Sciatic nerve (tissue), 2 donors: ENCODE measurements at regions of chr10 and their contacts with region 1.

Region 1: DNA sequence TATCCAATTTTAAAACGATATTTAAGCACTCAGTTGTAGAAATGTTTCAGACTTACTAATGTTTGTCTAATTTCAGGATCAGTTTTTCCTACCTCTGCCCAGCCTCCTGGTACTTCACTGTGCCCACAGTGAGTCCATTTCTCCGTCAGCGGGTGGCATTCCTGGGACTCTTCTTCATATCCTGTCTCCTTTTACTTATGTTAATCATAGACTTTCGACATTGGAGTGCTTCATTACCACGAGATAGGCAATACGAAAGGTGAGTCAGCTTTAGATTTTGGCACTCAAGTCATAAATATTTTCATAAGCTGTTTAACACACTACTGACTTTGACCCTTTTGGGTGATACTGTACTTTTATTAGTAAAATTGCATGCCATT is 2.1 kb downstream of the ENTPD7 start:
- DNase-seq: no peak
- ATAC-seq: no peak

Region 2: GRCh38 chr10:97744405-97745035 is 1916.8 kb before region 1 on chr10:
- intact Hi-C with region 1: loop called (anchors 5 kb)
- DNase-seq: peak; percentile 55
- ATAC-seq: no peak

Region 3: DNA sequence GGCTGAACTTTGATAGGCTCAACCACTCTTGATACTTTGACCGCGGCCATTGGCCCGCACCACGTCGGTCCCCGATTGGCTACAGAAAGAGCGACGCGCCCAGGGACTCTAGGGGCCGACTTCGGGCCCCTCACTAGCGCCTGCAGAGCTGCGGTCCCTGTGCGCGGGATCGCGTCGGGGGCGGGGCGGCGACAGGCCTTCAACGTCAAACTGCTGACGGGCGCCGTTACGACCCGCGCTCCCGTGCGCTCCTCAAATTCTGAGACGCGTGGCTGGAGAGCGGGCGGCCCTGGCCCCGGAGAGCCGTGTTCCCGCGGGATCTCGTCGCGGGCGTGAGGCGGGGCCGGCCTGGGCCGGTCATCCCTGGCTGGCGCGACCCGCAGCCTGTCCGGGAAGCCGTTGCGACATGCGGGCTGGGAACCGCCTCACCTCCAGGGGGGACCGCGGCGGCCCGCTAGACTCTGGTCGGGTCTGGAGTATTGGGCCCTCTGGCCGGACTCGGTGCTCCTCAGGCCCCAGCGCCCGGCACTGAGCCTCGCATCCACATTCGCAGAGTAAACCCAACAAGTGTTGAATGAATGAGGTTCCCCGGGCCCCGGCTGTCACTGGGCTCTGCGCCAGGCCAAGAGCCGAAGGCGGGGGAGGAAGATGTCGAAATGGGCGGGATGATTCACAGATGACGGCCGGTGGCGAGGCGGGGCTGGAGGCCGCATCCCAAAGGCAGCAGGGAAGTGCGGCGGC is 40.5 kb before region 1 on chr10:
- intact Hi-C with region 1: no loop called
- DNase-seq: peak; percentile 96
- ATAC-seq: peak; percentile 95